ENCODE measurements at regions of chr2 and their contacts with region 1.

Region 1: GRCh38 chr2:161992526-161992925 is 81.5 kb downstream of the DPP4 start:
- DNase-seq: peak; percentile 80
- H3K4me3 Mint-ChIP-seq: peak overlapping the region; percentile 78
- H3K27ac Mint-ChIP-seq: peak overlapping the region; percentile 97
- H3K4me1 Mint-ChIP-seq: peaks cover 49% of the 10 kb centered on the region
- H3K27me3 Mint-ChIP-seq: no peaks in the 10 kb centered on the region

Region 2: DNA sequence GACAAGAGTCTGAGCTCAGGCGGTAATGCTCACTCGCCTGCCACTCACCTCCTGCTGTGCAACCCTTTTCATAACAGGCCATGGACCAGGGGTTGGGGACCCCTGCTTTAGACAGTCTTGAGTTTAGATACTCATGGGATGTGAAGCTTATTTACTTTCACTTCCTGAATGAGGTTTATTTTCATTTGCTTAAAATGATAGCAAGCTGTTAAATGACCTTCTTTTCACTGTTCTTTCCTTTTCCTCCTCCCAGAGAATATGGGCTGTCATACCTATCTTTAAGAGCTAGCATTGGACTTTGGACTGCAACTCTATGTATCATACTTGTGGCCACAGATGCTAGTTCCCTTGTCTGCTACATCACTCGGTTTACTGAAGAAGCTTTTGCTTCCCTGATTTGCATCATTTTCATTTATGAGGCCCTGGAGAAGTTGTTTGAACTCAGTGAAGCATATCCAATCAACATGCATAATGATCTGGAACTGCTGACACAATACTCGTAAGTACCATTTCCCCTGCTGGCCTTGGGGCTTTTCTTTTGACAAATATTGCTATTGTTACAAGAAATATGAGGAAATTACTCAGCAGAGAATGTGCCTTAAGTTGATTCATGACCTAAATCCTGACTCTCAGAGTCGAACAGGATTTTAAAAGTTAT is 87.0 kb before region 1 on chr2:
- CTCF ChIA-PET with region 1: no interaction called
- intact Hi-C with region 1: loop called (anchors 1 kb)
- DNase-seq: peak; percentile 50
- H3K4me3 Mint-ChIP-seq: no peak overlapping the region
- H3K27ac Mint-ChIP-seq: peak overlapping the region; percentile 57
- H3K4me1 Mint-ChIP-seq: peaks cover 6% of the 10 kb centered on the region
- H3K27me3 Mint-ChIP-seq: no peaks in the 10 kb centered on the region

Region 3: DNA sequence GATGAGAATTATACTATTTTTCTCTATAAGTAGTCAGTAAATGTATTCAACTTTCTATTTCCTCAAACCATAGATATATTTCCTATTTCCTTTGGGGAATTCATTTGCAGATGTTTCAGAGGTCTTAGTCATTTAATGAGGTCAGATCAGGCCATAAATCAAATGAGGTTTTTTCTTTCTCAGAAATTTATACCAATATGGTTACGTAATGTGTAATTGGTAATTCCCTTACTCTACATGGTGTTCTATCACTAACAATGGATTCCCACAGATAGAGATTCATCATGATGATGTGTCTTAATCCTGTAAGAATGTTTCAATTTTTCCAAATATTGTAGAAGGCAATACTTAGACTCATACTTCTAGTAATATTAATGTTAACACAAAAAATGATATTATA is 26.5 kb before region 1 on chr2:
- CTCF ChIA-PET with region 1: no interaction called
- intact Hi-C with region 1: loop called (anchors 1 kb)
- DNase-seq: no peak
- H3K4me3 Mint-ChIP-seq: no peak overlapping the region
- H3K27ac Mint-ChIP-seq: no peak overlapping the region
- H3K4me1 Mint-ChIP-seq: peaks cover 28% of the 10 kb centered on the region
- H3K27me3 Mint-ChIP-seq: no peaks in the 10 kb centered on the region

Region 4: GRCh38 chr2:161975062-161975812 is 17.3 kb before region 1 on chr2:
- CTCF ChIA-PET with region 1: interaction called, 5 read pairs
- intact Hi-C with region 1: loop called (anchors 2 kb)
- DNase-seq: no peak
- H3K4me3 Mint-ChIP-seq: no peak overlapping the region
- H3K27ac Mint-ChIP-seq: peak overlapping the region; percentile 75
- H3K4me1 Mint-ChIP-seq: peaks cover 43% of the 10 kb centered on the region
- H3K27me3 Mint-ChIP-seq: no peaks in the 10 kb centered on the region

Region 5: DNA sequence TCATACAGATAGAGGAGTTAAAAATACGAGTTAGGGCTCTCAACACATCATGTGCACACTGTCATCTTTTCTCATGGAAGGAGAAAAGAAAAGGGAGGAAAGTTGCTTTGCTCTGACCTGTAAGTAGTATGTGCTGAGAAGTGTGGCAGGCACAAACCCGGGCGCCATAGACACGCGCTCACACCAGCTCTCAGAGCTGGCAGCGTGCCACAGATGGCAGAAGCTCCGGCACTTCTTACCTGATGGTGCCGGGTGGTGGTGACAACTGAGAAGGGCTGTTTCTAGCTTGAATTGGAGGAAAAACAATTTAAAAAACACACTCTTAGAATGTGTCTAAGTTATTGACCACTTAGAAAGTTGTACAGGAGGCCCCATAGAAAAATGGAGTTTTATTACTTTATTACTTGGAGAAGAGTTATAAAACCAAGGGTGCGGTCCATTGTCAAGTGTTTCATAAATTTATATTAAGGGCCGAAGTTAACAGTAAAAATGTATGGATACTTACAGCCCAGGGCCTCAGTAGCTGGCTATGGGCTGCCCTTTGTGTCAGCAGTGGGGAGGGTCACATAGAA is 10.8 kb before region 1 on chr2:
- CTCF ChIA-PET with region 1: interaction called, 7 read pairs
- intact Hi-C with region 1: loop called (anchors 1 kb)
- DNase-seq: no peak
- H3K4me3 Mint-ChIP-seq: no peak overlapping the region
- H3K27ac Mint-ChIP-seq: no peak overlapping the region
- H3K4me1 Mint-ChIP-seq: peaks cover 24% of the 10 kb centered on the region
- H3K27me3 Mint-ChIP-seq: no peaks in the 10 kb centered on the region

Region 6: GRCh38 chr2:162025121-162026031 is 32.9 kb after region 1 on chr2:
- CTCF ChIA-PET with region 1: no interaction called
- intact Hi-C with region 1: loop called (anchors 1 kb)
- DNase-seq: peak; percentile 32
- H3K4me3 Mint-ChIP-seq: no peak overlapping the region
- H3K27ac Mint-ChIP-seq: no peak overlapping the region
- H3K4me1 Mint-ChIP-seq: peaks cover 63% of the 10 kb centered on the region
- H3K27me3 Mint-ChIP-seq: no peaks in the 10 kb centered on the region

Region 7: DNA sequence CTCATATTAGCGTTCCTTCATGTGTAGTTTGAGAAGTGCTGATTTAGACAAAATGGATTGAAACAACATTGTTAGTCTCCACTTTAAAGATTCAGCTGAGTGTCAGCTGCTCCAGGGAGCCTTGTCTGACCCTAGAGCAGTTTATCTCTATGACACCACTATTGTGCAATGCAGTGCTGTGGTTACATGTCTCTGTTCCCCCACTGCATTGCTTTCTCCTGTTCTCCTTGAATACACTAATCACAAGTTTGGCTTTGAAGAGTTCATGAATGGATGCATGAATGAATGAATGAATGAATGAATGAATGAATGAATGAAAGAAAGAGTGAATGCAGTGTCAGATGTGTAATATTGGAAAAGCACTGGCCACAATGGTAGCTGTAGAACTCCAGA is 121.2 kb after region 1 on chr2:
- CTCF ChIA-PET with region 1: no interaction called
- intact Hi-C with region 1: no loop called
- DNase-seq: no peak
- H3K4me3 Mint-ChIP-seq: no peak overlapping the region
- H3K27ac Mint-ChIP-seq: no peak overlapping the region
- H3K4me1 Mint-ChIP-seq: peaks cover 3% of the 10 kb centered on the region
- H3K27me3 Mint-ChIP-seq: no peaks in the 10 kb centered on the region

Measured in activated naive CD4-positive, alpha-beta T cell treated with anti-CD3 and anti-CD28 coated beads for 36 hours (primary cell).